ENCODE measurements at regions of chr1 and their contacts with region 1.

Region 1: GRCh38 chr1:215226757-215227156 is 144.2 kb downstream of the KCNK2 start:
- DNase-seq: no peak
- H3K4me3 ChIP-seq: no peak overlapping the region
- H3K27ac ChIP-seq: no peak overlapping the region
- H3K4me1 ChIP-seq: no peaks in the 10 kb centered on the region
- H3K27me3 ChIP-seq: no peaks in the 10 kb centered on the region
- CTCF ChIP-seq: no peak
- EP300 ChIP-seq: no peak
- POLR2A ChIP-seq: no peak

Region 2: GRCh38 chr1:215269955-215270354 is 43.2 kb after region 1 on chr1:
- in situ Hi-C with region 1: no loop called
- intact Hi-C with region 1: loop called (anchors 1 kb)
- DNase-seq: no peak
- H3K4me3 ChIP-seq: no peak overlapping the region
- H3K27ac ChIP-seq: no peak overlapping the region
- H3K4me1 ChIP-seq: no peaks in the 10 kb centered on the region
- H3K27me3 ChIP-seq: no peaks in the 10 kb centered on the region
- CTCF ChIP-seq: no peak
- EP300 ChIP-seq: no peak
- POLR2A ChIP-seq: no peak

Measured in transverse colon (tissue), 4 donors.